ENCODE measurements at regions of chrX and their contacts with region 1.

Region 1: DNA sequence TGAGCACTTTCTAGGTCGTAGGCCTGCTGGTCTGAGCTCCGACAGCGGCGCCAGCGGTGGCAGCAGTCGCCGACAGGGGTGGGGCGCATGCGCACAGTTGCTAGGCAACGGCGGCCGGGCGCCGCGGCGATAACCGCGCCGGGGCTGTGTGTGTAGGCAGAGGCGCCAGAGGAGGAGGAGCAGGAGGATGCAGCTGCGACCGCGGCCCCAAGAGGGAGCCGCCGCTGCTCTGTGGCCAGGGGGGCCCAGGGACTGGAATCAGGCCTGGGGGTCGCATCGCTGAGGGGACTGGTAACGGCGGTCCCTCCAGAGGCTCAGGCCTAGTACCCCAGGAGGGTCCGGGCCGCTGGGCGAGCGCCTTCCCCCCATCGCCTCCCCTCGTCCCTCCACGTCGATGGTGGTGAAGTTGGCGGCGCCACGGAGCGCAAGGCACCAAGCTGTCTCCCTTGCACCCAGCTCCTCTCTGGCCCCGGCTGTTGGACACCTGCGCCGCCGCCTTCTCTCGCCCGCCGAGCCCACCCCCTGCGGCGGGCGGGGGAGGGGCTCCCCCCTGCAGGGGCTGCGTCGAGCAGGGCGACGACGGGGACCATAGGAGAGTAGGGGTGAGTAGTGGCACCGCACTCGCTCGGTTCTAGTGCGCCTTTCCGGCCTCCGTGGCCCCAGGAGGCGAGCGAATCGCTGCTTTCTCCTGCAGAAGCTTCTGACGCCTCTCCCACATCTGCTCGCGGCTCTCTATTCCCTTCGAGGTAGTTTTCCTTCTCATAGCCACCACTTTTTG is 58.6 kb upstream of the ZC4H2 start:
- DNase-seq: peak; percentile 70 to 97 (median 80)

Region 2: GRCh38 chrX:65009459-65009858 is 25.4 kb before region 1 on chrX:
- intact Hi-C with region 1: no loop called
- DNase-seq: no peak

Region 3: DNA sequence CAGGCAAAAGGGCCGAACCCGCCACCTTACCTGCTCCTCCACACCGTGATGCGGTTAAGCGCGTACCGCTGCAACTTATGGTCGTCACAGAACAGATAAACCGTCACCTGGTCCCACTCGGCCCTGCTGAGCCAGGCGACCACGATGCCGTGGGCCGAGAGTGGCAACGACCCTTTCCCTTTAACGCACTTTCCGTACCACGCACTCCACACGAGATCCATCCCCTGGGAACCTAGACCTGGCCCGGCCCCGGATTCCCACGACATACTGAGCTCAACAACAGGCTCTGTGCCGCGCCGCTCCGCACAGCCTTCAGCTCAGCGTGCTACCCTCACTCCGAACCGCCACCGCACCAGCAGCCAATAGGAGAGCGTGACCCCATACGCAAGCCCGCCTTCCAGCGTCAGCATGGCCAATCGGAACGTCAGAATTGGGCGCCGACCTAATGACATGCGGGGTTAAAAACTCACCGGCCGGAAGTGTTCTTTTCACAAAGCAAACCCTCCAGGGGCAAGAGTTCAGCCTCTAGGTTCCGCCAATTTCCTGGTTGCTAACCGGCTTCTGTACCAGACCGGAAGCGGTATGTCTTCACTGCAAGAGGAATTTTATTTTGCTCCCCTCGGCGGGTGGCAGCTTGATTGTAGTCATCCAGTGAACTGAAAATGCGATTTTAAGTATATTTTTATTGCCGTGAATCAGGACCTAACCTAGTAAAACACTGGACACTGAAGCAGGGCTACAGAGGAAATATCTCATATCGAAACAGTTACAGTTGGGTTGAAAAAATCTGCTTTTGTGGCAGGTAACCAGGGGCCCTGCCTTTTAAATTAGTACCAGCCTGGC is 499.8 kb after region 1 on chrX and contains the start of gene LAS1L:
- intact Hi-C with region 1: loop called (anchors 10 kb)
- DNase-seq: peak; percentile 82 to 99 (median 92)